SK-N-SH (cell line): ENCODE measurements at regions of chr10 and their contacts with region 1.

Region 1: DNA sequence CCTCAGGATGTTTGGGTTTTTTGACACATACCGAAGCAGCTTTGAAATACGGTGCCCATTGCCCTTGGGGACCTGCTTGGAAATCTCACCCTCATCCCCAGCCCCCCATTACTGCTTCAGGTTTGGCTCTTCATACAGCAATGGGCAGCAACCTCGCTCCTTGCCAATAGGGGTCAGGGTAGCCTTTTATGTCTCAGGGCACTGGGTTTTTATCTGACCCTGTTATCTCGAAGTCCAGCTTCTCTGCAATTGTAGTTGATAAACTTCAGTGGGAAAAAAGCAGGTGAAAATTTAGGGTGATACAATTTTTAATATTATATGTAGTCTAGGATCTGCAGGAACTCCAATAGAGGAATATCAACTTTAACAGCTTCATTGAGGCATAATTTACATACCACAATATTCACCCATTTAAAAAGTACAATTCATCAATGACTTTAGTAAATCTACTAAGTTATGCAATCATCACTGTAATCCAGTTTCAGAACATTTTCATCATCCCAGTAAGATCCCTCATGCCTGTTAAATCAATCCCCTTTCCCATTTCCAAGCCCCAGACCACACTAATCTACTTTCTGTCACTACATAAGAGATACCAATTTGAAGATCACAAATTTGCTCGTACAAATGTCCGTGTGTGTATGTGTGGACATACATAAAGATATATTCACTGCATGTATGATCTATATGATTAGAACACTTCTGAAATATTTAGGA is 386.2 kb downstream of the KCNMA1 start:
- DNase-seq: peak; percentile 58
- H3K4me3 ChIP-seq: no peak overlapping the region; a peak in 1 of 4 replicates
- H3K27ac ChIP-seq: no peak overlapping the region
- H3K4me1 ChIP-seq: peaks cover 12 to 16% of the 10 kb centered on the region in 2 experiments; a peak in 3 of 4 replicates
- H3K27me3 ChIP-seq: no peaks in the 10 kb centered on the region
- CTCF ChIP-seq: peak; percentile 86
- EP300 ChIP-seq: no peak
- RAD21 ChIP-seq: peak; percentile 93

Region 2: DNA sequence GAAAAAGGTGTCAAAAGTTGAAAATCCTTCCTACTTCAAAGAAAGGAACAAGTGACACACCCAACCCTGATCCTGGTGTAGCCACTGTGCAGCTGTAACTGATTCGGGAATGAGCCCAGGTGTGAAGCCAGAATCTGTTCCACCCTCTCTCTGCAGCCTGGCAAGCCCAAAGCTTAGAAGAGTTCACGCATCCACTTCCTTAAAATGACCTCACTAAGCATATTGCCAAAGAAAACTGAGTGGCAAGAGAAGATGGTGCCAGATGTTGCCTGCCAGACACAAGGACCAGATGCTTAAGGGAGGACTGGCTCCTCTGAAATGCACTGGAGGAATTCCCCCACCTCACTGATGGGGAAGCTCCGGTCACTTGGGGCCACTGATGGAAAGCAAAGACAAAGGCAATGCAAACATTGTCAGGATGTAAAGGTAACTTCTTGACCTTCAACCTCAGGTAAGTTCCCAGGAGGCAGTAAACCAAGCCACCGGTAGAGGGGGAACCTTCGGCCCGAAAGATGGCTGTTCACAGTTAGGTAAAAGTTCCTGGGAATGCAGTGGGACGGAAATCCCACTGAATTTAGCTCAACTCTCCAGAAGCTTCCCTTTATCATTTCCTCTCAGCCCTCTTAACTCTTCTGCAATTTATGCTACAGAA is 168.7 kb before region 1 on chr10:
- CTCF ChIA-PET with region 1: no interaction called
- POLR2A ChIA-PET with region 1: no interaction called
- DNase-seq: no peak
- H3K4me3 ChIP-seq: no peak overlapping the region
- H3K27ac ChIP-seq: no peak overlapping the region
- H3K4me1 ChIP-seq: peaks cover 0 to 16% of the 10 kb centered on the region in 2 experiments; a peak in 2 of 4 replicates
- H3K27me3 ChIP-seq: no peaks in the 10 kb centered on the region
- CTCF ChIP-seq: no peak
- EP300 ChIP-seq: no peak
- RAD21 ChIP-seq: no peak

Region 3: DNA sequence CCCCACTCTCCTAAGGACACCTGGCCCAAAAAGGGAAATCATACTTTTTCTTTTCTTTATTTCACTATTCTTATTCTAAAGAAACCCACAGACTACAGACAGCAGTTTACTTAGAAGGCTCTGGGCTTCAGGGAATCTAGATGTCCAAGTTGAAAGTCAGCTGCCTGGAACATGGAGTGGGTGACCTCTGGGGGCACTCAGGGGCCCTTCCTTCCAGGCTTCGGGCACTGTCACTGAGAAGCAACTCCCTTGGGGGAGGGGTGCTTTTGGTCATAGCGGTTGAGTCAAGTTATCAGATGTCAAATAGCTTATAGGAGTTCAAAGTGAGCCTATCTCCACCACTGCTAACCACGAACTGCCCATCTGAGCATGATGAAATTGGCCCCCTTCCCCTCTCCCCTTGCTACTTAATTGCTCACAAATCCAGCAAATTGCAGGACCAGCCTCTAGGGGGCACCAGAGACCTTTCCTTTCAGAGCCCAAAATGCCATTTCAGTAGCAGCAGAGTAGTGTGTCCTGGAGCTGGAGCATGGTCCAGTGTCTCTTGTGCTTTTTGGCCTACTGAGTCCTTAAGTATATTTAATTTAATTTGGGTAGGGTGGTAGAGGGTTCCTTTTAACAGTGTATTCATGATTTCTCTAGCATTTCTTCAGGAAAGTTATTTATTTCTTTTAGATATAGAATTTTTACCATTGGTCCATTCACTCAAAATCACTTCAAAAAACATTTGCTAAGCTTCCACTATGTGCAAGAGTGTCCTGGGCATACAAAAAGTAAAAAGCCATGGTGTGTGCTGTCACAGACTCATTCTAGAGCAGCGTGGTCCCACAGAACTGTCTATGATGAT is 77.6 kb before region 1 on chr10:
- CTCF ChIA-PET with region 1: interaction called, 41 read pairs
- POLR2A ChIA-PET with region 1: no interaction called
- DNase-seq: peak; percentile 66
- H3K4me3 ChIP-seq: no peak overlapping the region; a peak in 1 of 4 replicates
- H3K27ac ChIP-seq: no peak overlapping the region
- H3K4me1 ChIP-seq: peaks cover 0 to 2% of the 10 kb centered on the region in 2 experiments; a peak in 3 of 4 replicates
- H3K27me3 ChIP-seq: no peaks in the 10 kb centered on the region
- CTCF ChIP-seq: peak; percentile 95
- EP300 ChIP-seq: no peak
- RAD21 ChIP-seq: peak; percentile 97

Region 4: GRCh38 chr10:77287647-77288120 is 36.2 kb after region 1 on chr10:
- CTCF ChIA-PET with region 1: interaction called, 12 read pairs
- POLR2A ChIA-PET with region 1: no interaction called
- DNase-seq: no peak
- H3K4me3 ChIP-seq: no peak overlapping the region
- H3K27ac ChIP-seq: peak overlapping the region in 1 of 2 experiments; percentile 55; a peak in 1 of 4 replicates
- H3K4me1 ChIP-seq: peaks cover 29 to 41% of the 10 kb centered on the region in 2 experiments
- H3K27me3 ChIP-seq: no peaks in the 10 kb centered on the region
- CTCF ChIP-seq: no peak
- EP300 ChIP-seq: no peak
- RAD21 ChIP-seq: no peak

Region 5: GRCh38 chr10:77405771-77406241 is 154.4 kb after region 1 on chr10:
- CTCF ChIA-PET with region 1: no interaction called
- POLR2A ChIA-PET with region 1: no interaction called
- DNase-seq: peak; percentile 58
- H3K4me3 ChIP-seq: no peak overlapping the region
- H3K27ac ChIP-seq: peak overlapping the region; percentile 56 to 71
- H3K4me1 ChIP-seq: peaks cover 21 to 36% of the 10 kb centered on the region in 2 experiments; a peak in 3 of 4 replicates
- H3K27me3 ChIP-seq: no peaks in the 10 kb centered on the region
- CTCF ChIP-seq: no peak
- EP300 ChIP-seq: no peak; a peak in 1 of 4 replicates
- RAD21 ChIP-seq: no peak

Region 6: DNA sequence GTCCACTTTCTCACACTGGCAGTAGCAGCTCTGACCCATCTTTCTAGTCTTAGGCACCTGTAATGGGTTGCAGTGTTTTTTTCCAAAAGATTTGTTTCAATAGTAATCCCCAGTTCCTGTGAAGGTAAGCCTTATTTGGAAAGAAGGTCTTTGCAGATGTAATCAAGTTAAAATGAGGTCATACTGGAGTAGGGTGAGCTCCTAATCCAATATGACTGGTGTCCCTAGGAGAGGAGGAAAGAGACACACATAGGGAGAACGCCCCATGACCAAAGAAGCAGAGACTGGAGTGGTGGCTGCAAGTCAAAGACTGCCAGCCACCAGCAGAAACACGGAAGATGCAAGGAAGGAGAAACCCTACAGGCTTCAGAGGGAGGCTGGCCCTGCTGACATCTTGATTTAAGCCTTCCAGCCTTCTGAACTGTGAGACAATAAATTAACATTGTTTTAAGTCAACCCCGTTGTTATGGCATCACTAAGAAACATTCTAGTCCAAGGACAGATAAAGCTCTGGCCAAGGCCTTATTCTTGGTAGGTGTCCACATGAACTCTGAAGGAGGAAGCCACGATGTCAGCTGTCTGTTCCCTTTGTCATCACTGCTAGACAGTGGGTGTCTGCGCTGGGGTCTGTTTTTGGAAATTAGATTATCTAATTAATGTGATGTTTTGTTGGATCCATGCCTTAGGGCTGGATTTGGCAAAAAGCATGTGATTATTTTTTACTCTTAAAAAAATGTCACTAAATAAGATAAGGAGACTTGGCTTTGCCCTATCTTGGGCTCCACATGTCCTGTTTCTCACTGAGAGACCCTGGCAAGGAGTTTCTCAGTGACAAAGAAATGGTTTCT is 171.3 kb after region 1 on chr10:
- CTCF ChIA-PET with region 1: interaction called, 11 read pairs
- POLR2A ChIA-PET with region 1: no interaction called
- DNase-seq: peak; percentile 60
- H3K4me3 ChIP-seq: no peak overlapping the region
- H3K27ac ChIP-seq: peak overlapping the region in 1 of 2 experiments; percentile 94; a peak in 2 of 4 replicates
- H3K4me1 ChIP-seq: peaks cover 10 to 47% of the 10 kb centered on the region in 2 experiments; a peak in 3 of 4 replicates
- H3K27me3 ChIP-seq: no peaks in the 10 kb centered on the region
- CTCF ChIP-seq: no peak
- EP300 ChIP-seq: peak in 1 of 2 experiments; percentile 86; a peak in 2 of 4 replicates
- RAD21 ChIP-seq: no peak

Region 7: GRCh38 chr10:77641788-77642397 is 390.4 kb after region 1 on chr10:
- CTCF ChIA-PET with region 1: interaction called, 140 read pairs
- POLR2A ChIA-PET with region 1: no interaction called
- DNase-seq: peak; percentile 72
- H3K4me3 ChIP-seq: no peak overlapping the region; a peak in 1 of 4 replicates
- H3K27ac ChIP-seq: no peak overlapping the region
- H3K4me1 ChIP-seq: peaks cover 0 to 10% of the 10 kb centered on the region in 2 experiments; a peak in 2 of 4 replicates
- H3K27me3 ChIP-seq: no peaks in the 10 kb centered on the region
- CTCF ChIP-seq: peak; percentile 90
- EP300 ChIP-seq: no peak
- RAD21 ChIP-seq: peak; percentile 99

Region 8: DNA sequence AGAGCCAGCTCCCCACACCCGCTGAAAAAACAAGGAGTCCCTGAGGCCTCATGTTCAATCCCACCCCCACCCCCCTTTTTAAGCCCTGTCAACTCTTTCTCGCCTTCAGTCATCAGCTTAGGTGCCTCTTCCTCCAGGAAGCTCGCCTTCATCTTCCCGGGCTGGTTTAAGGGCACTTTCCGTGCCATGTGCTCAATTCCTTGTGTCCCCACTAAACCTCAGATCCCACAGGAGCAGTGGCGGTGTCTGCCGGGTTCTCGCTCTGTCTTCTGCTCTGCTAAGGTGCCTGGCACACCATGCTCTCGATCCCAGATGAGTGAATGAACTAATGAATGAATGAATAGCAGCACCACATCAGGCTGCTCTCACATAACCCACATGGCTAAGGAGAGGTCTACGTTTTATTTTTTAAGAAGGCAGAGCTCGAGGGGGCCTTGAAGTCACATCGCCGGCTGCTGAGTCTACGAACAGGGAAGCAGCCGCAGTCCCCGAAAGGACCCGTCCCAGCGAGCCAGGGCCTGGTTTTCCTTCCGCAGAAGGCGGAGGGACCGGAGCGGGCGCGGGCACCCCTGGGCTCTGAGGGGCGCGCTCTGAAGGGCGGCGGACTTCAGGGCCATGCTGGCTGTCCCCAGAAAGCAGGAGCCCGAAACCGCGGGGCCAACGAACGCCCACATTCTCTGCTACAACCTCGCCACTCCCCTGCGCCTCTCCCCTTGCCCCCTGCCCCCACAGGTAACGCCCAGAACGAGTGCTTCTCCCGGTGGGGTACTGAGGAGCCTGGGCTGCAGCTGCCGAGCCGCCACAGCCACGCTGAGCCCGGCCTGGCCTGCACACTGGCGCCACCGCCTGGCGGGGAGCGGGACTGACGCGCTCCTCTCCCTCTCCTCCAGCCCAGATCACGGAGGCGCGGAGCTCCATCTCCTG is 459.6 kb after region 1 on chr10:
- CTCF ChIA-PET with region 1: interaction called, 22 read pairs
- POLR2A ChIA-PET with region 1: no interaction called
- DNase-seq: peak; percentile 90
- H3K4me3 ChIP-seq: no peak overlapping the region; a peak in 1 of 4 replicates
- H3K27ac ChIP-seq: no peak overlapping the region
- H3K4me1 ChIP-seq: peaks cover 4 to 8% of the 10 kb centered on the region in 2 experiments; a peak in 1 of 4 replicates
- H3K27me3 ChIP-seq: no peaks in the 10 kb centered on the region
- CTCF ChIP-seq: peak; percentile 86
- EP300 ChIP-seq: no peak
- RAD21 ChIP-seq: peak; percentile 75